ENCODE measurements at regions of chr18 and their contacts with region 1.

Region 1: GRCh38 chr18:11851146-11851805 is at the start of gene CHMP1B:
- DNase-seq: peak; percentile 95 to 97 (median 97)
- ATAC-seq: peak; percentile 91
- H3K4me3 ChIP-seq: peak within 1 kb of the TSS; percentile 88
- H3K4me3 Mint-ChIP-seq: peak within 1 kb of the TSS; percentile 89 to 100 (median 100)
- H3K27ac ChIP-seq: peak within 1 kb of the TSS; percentile 96
- H3K27ac Mint-ChIP-seq: peak within 1 kb of the TSS; percentile 97 to 100 (median 100)
- H3K4me1 ChIP-seq: peaks cover 19 to 21% of the 10 kb centered on the region in 2 donors
- H3K4me1 Mint-ChIP-seq: peaks cover 16 to 62% (median 50%) of the 10 kb centered on the region in 7 donors
- H3K27me3 ChIP-seq: no peaks in the 10 kb centered on the region
- H3K27me3 Mint-ChIP-seq: peaks cover 0 to 13% (median 0%) of the 10 kb centered on the region in 5 donors
- total RNA-seq, gene CHMP1B: 27.2 to 115 (median 56.1) TPM

Region 2: DNA sequence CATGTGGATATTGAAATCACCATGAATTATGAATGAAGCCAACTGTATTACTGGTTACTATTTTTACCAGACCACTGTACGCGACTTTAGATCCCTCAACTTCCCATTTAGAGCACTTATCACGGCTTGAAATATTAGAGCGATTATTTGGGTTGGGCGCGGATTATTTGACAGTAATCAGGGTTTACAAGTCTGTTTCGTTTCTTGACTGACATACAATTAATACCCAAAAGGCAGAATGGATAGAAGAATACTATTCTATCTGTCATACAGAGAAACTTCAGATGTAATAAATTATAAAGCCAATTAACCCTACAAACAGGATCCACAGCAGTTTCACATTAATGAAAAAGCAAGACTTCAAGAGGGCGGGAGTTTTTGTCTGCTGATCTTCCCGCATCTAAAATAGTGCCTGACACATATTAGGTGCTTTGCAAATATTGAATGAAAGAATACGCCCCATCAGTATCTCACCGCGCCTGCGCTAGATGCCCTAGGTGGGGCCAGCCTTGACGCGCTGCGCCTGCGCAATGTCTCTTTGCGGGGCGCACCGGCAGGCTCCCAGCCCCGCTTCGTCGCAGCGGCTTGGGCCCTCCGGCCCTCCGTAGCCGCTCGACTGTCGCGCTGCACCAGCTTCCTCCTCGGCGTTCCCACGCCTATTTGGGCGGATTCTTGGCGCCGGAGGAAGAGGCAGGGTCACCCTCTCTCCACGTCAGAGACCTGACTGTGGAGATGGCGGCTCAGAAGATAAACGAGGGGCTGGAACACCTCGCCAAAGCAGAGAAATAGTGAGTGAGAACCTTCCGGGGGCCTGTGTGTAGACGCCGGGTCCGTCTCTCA is 1325.7 kb before region 1 on chr18 and contains the start of gene NAPG:
- CTCF ChIA-PET with region 1: no interaction called
- POLR2A ChIA-PET with region 1: no interaction called
- intact Hi-C with region 1: loop called in 1 of 2 experiments (anchors 1 kb)
- DNase-seq: peak; percentile 88 to 94 (median 91)
- ATAC-seq: peak; percentile 94
- H3K4me3 ChIP-seq: peak within 1 kb of the TSS; percentile 93
- H3K4me3 Mint-ChIP-seq: peak within 1 kb of the TSS; percentile 94 to 99 (median 98)
- H3K27ac ChIP-seq: peak within 1 kb of the TSS; percentile 76
- H3K27ac Mint-ChIP-seq: peak within 1 kb of the TSS; percentile 84 to 99 (median 96)
- H3K4me1 ChIP-seq: peaks cover 4 to 22% of the 10 kb centered on the region in 2 donors
- H3K4me1 Mint-ChIP-seq: peaks cover 43 to 62% (median 53%) of the 10 kb centered on the region in 7 donors
- H3K27me3 ChIP-seq: no peaks in the 10 kb centered on the region
- H3K27me3 Mint-ChIP-seq: peaks cover 0 to 10% (median 0%) of the 10 kb centered on the region in 5 donors
- total RNA-seq, gene NAPG: 28.1 to 35.7 (median 30.0) TPM

Region 3: DNA sequence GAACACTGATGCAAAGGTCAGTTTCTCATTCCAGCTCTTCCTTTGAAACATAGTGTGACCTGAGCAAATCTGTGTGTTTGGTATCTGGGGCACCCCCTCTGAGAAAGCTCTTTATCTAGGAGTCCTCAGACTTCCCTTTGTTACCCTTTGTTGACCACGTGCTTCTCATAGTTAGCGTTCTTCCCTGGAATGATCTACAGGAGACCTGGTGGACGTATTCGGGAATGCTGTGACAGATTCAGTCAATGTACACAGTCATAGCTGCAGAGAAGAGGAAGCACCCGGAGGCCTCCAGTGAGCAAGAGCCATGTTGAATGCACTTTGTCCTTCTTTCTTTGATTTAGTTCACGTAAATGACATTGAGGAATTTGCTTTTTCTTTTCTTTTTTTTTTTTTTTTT is 10.8 kb before region 1 on chr18:
- CTCF ChIA-PET with region 1: no interaction called
- POLR2A ChIA-PET with region 1: interaction called, 10 read pairs
- intact Hi-C with region 1: no loop called
- DNase-seq: no peak
- ATAC-seq: no peak
- H3K4me3 ChIP-seq: no peak overlapping the region
- H3K4me3 Mint-ChIP-seq: no peak overlapping the region
- H3K27ac ChIP-seq: no peak overlapping the region
- H3K27ac Mint-ChIP-seq: peak overlapping the region in 1 of 9 donors; percentile 18
- H3K4me1 ChIP-seq: no peaks in the 10 kb centered on the region
- H3K4me1 Mint-ChIP-seq: no peaks in the 10 kb centered on the region
- H3K27me3 ChIP-seq: no peaks in the 10 kb centered on the region
- H3K27me3 Mint-ChIP-seq: peaks cover 0 to 2% (median 0%) of the 10 kb centered on the region in 5 donors

Region 4: GRCh38 chr18:12038639-12039417 is 187.6 kb after region 1 on chr18:
- CTCF ChIA-PET with region 1: no interaction called
- POLR2A ChIA-PET with region 1: no interaction called
- intact Hi-C with region 1: loop called in 1 of 2 experiments (anchors 2 kb)
- DNase-seq: peak; percentile 41 to 84 (median 68)
- ATAC-seq: peak; percentile 95
- H3K4me3 ChIP-seq: peak overlapping the region; percentile 52
- H3K4me3 Mint-ChIP-seq: peak overlapping the region; percentile 59 to 79 (median 72)
- H3K27ac ChIP-seq: no peak overlapping the region
- H3K27ac Mint-ChIP-seq: no peak overlapping the region
- H3K4me1 ChIP-seq: no peaks in the 10 kb centered on the region
- H3K4me1 Mint-ChIP-seq: peaks cover 0 to 19% (median 0%) of the 10 kb centered on the region in 7 donors
- H3K27me3 ChIP-seq: peaks cover 0 to 3% of the 10 kb centered on the region in 2 donors
- H3K27me3 Mint-ChIP-seq: peaks cover 10 to 21% (median 14%) of the 10 kb centered on the region in 5 donors

Region 5: GRCh38 chr18:12702221-12703095 is 851.2 kb after region 1 on chr18 and contains the starts of genes CEP76 and PSMG2:
- CTCF ChIA-PET with region 1: no interaction called
- POLR2A ChIA-PET with region 1: interaction called, 3 read pairs
- intact Hi-C with region 1: loop called in 1 of 2 experiments (anchors 2 kb)
- DNase-seq: peak; percentile 77 to 88 (median 84)
- ATAC-seq: peak; percentile 89
- H3K4me3 ChIP-seq: peak within 1 kb of the TSS; percentile 97
- H3K4me3 Mint-ChIP-seq: peak within 1 kb of the TSS; percentile 92 to 99 (median 98)
- H3K27ac ChIP-seq: peak within 1 kb of the TSS; percentile 96
- H3K27ac Mint-ChIP-seq: peak within 1 kb of the TSS; percentile 91 to 100 (median 96)
- H3K4me1 ChIP-seq: peaks cover 17 to 20% of the 10 kb centered on the region in 2 donors
- H3K4me1 Mint-ChIP-seq: peaks cover 36 to 63% (median 50%) of the 10 kb centered on the region in 7 donors
- H3K27me3 ChIP-seq: no peaks in the 10 kb centered on the region
- H3K27me3 Mint-ChIP-seq: no peaks in the 10 kb centered on the region
- total RNA-seq, gene CEP76: 6.9 to 13.2 (median 11.1) TPM
- total RNA-seq, gene PSMG2: 49.9 to 104 (median 59.9) TPM

Region 6: GRCh38 chr18:13375302-13376255 is 1524.3 kb after region 1 on chr18:
- CTCF ChIA-PET with region 1: no interaction called
- POLR2A ChIA-PET with region 1: no interaction called
- intact Hi-C with region 1: loop called in 1 of 2 experiments (anchors 5 kb)
- DNase-seq: peak in 7 of 9 donors; percentile 29 to 81 (median 54)
- ATAC-seq: peak; percentile 77
- H3K4me3 ChIP-seq: peak overlapping the region; percentile 34
- H3K4me3 Mint-ChIP-seq: peak overlapping the region; percentile 56 to 86 (median 78)
- H3K27ac ChIP-seq: peak overlapping the region; percentile 83
- H3K27ac Mint-ChIP-seq: peak overlapping the region; percentile 92 to 99 (median 96)
- H3K4me1 ChIP-seq: peaks cover 10 to 64% of the 10 kb centered on the region in 2 donors
- H3K4me1 Mint-ChIP-seq: peaks cover 32 to 85% (median 77%) of the 10 kb centered on the region in 7 donors
- H3K27me3 ChIP-seq: no peaks in the 10 kb centered on the region
- H3K27me3 Mint-ChIP-seq: no peaks in the 10 kb centered on the region

Measured in naive thymus-derived CD4-positive, alpha-beta T cell (primary cell).